ENCODE measurements at regions of chr16 and their contacts with region 1.

Region 1: GRCh38 chr16:89873972-89874689 is 739 bp downstream of the TCF25 start:
- DNase-seq: peak; percentile 94
- H3K4me3 Mint-ChIP-seq: peak overlapping the region; percentile 85
- H3K27ac Mint-ChIP-seq: peak overlapping the region; percentile 98
- H3K4me1 Mint-ChIP-seq: peaks cover 17% of the 10 kb centered on the region
- H3K27me3 Mint-ChIP-seq: no peaks in the 10 kb centered on the region

Region 2: GRCh38 chr16:89686520-89687091 is 187.5 kb before region 1 on chr16 and contains the start of gene CDK10:
- CTCF ChIA-PET with region 1: no interaction called
- POLR2A ChIA-PET with region 1: interaction called, 10 read pairs
- DNase-seq: peak; percentile 92
- H3K4me3 Mint-ChIP-seq: peak within 1 kb of the TSS; percentile 91
- H3K27ac Mint-ChIP-seq: peak within 1 kb of the TSS; percentile 85
- H3K4me1 Mint-ChIP-seq: peaks cover 18% of the 10 kb centered on the region
- H3K27me3 Mint-ChIP-seq: no peaks in the 10 kb centered on the region
- total RNA-seq, gene CDK10: 73.2 to 74.0 TPM

Region 3: GRCh38 chr16:89720813-89721545 is 153.2 kb before region 1 on chr16 and contains the starts of genes VPS9D1 and ZNF276:
- CTCF ChIA-PET with region 1: interaction called, 3 read pairs
- POLR2A ChIA-PET with region 1: interaction called, 20 read pairs
- DNase-seq: peak; percentile 84
- H3K4me3 Mint-ChIP-seq: peak within 1 kb of the TSS; percentile 96
- H3K27ac Mint-ChIP-seq: peak within 1 kb of the TSS; percentile 100
- H3K4me1 Mint-ChIP-seq: peaks cover 40% of the 10 kb centered on the region
- H3K27me3 Mint-ChIP-seq: no peaks in the 10 kb centered on the region
- total RNA-seq, gene VPS9D1: 7.0 to 7.8 TPM
- total RNA-seq, gene ZNF276: 50.4 to 56.5 TPM

Region 4: GRCh38 chr16:89841275-89841674 is 32.9 kb before region 1 on chr16:
- CTCF ChIA-PET with region 1: no interaction called
- POLR2A ChIA-PET with region 1: interaction called, 12 read pairs
- DNase-seq: peak; percentile 88
- H3K4me3 Mint-ChIP-seq: peak overlapping the region; percentile 40
- H3K27ac Mint-ChIP-seq: peak overlapping the region; percentile 64
- H3K4me1 Mint-ChIP-seq: peaks cover 47% of the 10 kb centered on the region
- H3K27me3 Mint-ChIP-seq: peaks cover 13% of the 10 kb centered on the region

Region 5: GRCh38 chr16:89853306-89853993 is 20.7 kb before region 1 on chr16:
- CTCF ChIA-PET with region 1: no interaction called
- POLR2A ChIA-PET with region 1: no interaction called
- DNase-seq: no peak
- H3K4me3 Mint-ChIP-seq: no peak overlapping the region
- H3K27ac Mint-ChIP-seq: no peak overlapping the region
- H3K4me1 Mint-ChIP-seq: no peaks in the 10 kb centered on the region
- H3K27me3 Mint-ChIP-seq: no peaks in the 10 kb centered on the region

Region 6: DNA sequence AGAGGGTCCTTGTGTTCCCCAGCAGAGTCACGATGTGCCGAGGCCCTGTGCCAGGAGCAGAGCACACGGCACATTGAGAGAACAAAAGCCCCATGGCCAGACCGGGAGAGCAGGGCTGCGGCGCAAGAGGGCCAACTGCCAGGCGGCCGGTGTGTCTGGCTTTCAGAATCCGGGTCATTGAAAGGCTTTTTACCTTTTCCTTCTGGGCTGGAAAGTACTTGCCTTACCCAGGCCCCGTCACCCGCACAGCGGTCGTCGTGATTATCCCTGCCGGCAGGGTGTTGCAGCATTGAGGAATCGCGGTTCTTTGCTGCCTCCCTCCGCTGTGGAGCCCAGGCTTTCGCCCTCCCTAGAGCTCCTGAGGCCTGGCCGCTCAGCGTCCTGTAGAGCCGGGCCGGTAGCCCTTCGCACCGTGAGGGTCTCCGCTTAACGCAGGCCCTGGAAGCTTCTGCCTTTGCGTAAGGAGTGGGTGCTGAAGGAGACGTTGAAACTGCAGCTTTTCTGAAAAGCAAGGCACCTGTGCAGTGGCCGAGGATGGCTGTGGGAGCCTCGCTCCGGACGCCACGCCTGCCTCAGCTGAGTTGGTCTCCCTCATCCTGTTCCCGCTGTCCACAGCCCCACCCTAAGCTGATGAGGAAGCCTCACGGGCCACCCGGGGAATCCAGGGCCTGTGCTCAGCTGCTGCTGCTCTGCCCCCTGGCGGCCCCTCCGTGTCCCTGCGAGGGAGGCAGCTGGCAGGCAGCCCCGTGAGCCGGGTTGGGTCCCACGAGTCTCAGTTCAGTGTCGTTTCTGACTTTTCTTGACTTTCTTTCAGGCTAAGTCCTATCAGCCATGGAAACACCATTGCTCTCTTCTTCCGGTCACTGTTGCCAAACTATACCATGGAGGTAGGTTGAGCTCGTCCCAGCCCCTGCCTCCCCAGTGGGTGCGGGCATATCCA is 35.9 kb after region 1 on chr16:
- CTCF ChIA-PET with region 1: interaction called, 5 read pairs
- POLR2A ChIA-PET with region 1: interaction called, 12 read pairs
- DNase-seq: peak; percentile 77
- H3K4me3 Mint-ChIP-seq: no peak overlapping the region
- H3K27ac Mint-ChIP-seq: no peak overlapping the region
- H3K4me1 Mint-ChIP-seq: peaks cover 10% of the 10 kb centered on the region
- H3K27me3 Mint-ChIP-seq: no peaks in the 10 kb centered on the region

Region 7: GRCh38 chr16:89972244-89973234 is 98.4 kb after region 1 on chr16:
- CTCF ChIA-PET with region 1: no interaction called
- POLR2A ChIA-PET with region 1: interaction called, 12 read pairs
- DNase-seq: peak; percentile 92
- H3K4me3 Mint-ChIP-seq: peak overlapping the region; percentile 99
- H3K27ac Mint-ChIP-seq: peak overlapping the region; percentile 95
- H3K4me1 Mint-ChIP-seq: peaks cover 36% of the 10 kb centered on the region
- H3K27me3 Mint-ChIP-seq: no peaks in the 10 kb centered on the region

Region 8: DNA sequence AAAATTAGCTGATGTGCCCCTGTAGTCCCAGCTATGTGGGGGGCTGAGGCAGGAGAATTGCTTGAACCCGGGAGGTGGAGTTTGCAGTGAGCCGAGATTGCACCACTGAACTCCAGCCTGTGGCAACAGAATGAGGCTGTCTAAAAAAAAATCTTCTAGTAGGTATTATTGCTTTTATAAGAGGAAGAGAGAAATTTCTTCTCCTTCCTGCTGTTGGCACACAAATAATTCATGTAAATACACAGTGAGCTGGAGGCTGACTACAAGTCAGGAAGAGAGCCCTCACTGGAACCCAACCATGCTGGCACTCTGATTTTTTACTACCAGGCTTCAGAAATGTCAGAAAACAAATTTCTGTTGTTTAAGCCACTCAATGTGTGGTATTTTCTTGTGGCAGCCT is 196.3 kb after region 1 on chr16:
- CTCF ChIA-PET with region 1: no interaction called
- POLR2A ChIA-PET with region 1: no interaction called
- DNase-seq: no peak
- H3K4me3 Mint-ChIP-seq: no peak overlapping the region
- H3K27ac Mint-ChIP-seq: no peak overlapping the region
- H3K4me1 Mint-ChIP-seq: no peaks in the 10 kb centered on the region
- H3K27me3 Mint-ChIP-seq: peaks cover 19% of the 10 kb centered on the region

Measured in activated CD4-positive, alpha-beta memory T cell treated with anti-CD3 and anti-CD28 coated beads, Interleukin-2, amount 10 ng/mL, durations not matched to agents 7 days and 5 days (primary cell).